Transverse colon (tissue), 4 donors: ENCODE measurements at regions of chr1 and their contacts with region 1.

Region 1: GRCh38 chr1:161486806-161487741 is 18.2 kb upstream of the FCGR2A start:
- DNase-seq: peak; percentile 34
- H3K4me3 ChIP-seq: peak overlapping the region in 1 of 4 donors; percentile 9
- H3K27ac ChIP-seq: no peak overlapping the region
- H3K4me1 ChIP-seq: peaks cover 0 to 6% (median 2%) of the 10 kb centered on the region in 4 donors
- H3K27me3 ChIP-seq: peaks cover 52% of the 10 kb centered on the region
- CTCF ChIP-seq: peak; percentile 69 to 87 (median 77)
- EP300 ChIP-seq: no peak
- POLR2A ChIP-seq: no peak

Region 2: GRCh38 chr1:160951443-160952128 is 535.5 kb before region 1 on chr1:
- in situ Hi-C with region 1: no loop called
- intact Hi-C with region 1: no loop called
- DNase-seq: peak; percentile 82
- H3K4me3 ChIP-seq: no peak overlapping the region
- H3K27ac ChIP-seq: no peak overlapping the region
- H3K4me1 ChIP-seq: peaks cover 0 to 9% (median 3%) of the 10 kb centered on the region in 4 donors
- H3K27me3 ChIP-seq: no peaks in the 10 kb centered on the region
- CTCF ChIP-seq: peak; percentile 42 to 76 (median 69)
- EP300 ChIP-seq: no peak
- POLR2A ChIP-seq: no peak

Region 3: DNA sequence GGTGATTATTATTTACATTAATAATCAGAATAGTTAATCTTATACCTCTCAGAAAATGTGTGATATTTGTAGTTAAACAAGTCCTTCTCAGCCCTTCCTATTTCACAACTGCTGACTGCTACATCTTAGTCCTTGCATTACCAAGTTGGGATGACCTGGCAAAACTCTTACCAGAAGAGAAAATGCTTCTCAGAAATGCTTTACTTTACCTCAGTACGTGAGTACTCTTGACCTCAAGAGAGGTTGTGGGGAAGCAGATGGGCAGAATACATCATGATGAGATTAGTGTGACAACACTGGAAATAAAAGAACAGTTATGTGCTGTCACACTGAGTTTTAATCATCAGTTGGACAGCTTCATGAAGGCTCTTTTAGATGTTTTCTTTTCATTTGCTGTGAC is 135.6 kb before region 1 on chr1:
- in situ Hi-C with region 1: no loop called
- intact Hi-C with region 1: no loop called
- DNase-seq: no peak
- H3K4me3 ChIP-seq: no peak overlapping the region
- H3K27ac ChIP-seq: no peak overlapping the region
- H3K4me1 ChIP-seq: no peaks in the 10 kb centered on the region
- H3K27me3 ChIP-seq: no peaks in the 10 kb centered on the region
- CTCF ChIP-seq: no peak
- EP300 ChIP-seq: no peak
- POLR2A ChIP-seq: no peak

Region 4: DNA sequence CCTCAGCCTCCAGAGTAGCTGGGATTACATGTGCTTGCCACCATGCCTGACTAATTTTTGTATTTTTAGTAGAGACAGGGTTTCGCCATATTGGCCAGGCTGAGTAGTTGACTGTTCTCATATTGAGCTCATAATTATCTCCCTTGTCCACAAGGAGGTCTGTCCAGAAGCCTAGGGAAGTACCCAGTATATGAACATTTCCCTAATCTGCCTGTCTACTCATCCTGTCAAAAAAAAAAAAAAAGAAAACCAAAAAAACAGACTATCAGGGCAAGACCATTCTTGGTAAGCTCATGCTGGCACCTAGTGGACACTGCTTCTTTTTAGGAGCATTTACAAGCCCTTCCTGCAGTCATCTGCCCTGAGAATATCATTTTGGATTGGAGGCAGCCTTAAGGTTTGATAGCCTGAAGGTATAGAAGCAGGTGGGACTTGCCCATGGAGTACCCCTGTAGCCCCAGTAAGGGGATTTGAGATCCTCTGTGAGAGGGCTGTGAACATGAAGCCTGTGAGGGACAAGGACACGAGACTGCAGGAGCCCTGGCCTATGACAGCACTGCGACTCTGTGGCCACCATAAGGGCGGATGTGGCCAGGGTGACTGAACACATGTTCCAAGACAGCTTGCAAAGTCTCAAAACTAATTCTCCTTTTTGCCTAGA is 251.7 kb after region 1 on chr1:
- in situ Hi-C with region 1: loop called (anchors 10 kb)
- intact Hi-C with region 1: loop called (anchors 10 kb)
- DNase-seq: peak; percentile 72
- H3K4me3 ChIP-seq: no peak overlapping the region
- H3K27ac ChIP-seq: peak overlapping the region; percentile 36 to 64 (median 56)
- H3K4me1 ChIP-seq: peaks cover 0 to 9% (median 0%) of the 10 kb centered on the region in 4 donors
- H3K27me3 ChIP-seq: peaks cover 33% of the 10 kb centered on the region
- CTCF ChIP-seq: peak in 3 of 5 experiments; percentile 4 to 21 (median 17)
- EP300 ChIP-seq: no peak
- POLR2A ChIP-seq: no peak